ENCODE measurements at regions of chr18 and their contacts with region 1.

Region 1: DNA sequence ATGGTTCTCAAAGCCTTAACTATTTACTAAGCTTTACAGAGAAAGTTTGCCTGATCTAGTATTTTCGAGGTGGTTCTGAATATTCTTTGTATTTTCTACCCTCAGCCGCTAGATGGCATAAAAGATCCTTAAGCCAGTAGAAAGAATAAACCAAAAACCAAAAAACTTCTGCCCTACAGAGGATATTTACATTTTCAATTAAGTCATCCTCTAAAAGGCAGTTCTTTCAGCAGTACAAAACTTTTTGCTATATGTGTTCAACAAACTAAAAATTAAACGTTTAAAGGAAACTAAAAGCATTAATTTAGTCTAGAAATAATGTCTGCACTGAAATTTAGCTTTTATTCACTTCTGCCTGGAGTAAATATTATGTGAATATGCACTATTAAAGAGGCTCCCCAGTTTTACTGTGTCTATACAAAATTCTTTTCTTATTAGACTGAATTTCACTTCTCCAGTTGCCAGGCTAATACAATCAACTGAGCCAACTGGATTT is 297.5 kb downstream of the PIEZO2 start:
- DNase-seq: no peak
- H3K4me3 ChIP-seq: no peak overlapping the region
- H3K27ac ChIP-seq: no peak overlapping the region
- H3K4me1 ChIP-seq: no peaks in the 10 kb centered on the region
- H3K27me3 ChIP-seq: peaks cover 29% of the 10 kb centered on the region
- CTCF ChIP-seq: peak; percentile 80

Region 2: DNA sequence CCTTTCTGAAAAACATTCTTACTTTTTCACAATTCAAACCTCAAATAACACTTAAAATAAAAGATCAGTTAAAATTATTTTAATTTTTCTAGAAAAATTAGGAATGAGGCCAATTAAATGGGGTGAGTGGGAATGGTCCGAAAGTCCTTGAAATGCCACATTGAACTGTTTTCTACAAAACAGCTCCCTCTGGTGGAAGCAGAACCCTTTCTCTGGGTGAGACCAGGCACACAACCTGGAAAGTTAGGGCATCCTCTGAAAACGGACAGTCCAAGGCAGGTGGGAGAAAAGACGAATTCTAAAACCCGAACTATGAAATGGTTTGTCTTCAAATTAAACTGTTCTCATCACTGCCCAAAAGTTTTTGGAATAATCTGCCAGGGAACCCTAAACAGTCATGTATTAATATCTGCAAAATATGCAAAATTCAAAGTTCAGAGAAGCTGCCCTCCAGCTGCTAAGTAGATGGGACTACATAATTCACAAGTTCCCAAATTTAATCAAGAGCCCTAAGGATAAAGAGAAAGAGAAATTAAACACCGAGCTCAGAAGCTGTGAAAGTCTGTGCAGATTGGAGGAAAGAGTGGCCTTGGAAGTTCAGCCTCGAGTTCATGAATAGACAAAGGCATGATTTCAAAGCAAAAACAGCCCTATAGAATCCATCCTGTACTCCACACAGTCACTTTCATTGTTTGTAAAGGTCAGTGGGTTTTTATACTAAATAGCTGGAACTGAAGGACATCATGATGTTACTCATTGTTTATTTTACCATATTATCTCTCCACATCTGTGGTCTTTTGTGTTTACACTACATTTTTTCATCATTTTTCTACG is 189.2 kb after region 1 on chr18:
- intact Hi-C with region 1: loop called (anchors 5 kb)
- DNase-seq: no peak
- H3K4me3 ChIP-seq: no peak overlapping the region
- H3K27ac ChIP-seq: no peak overlapping the region
- H3K4me1 ChIP-seq: no peaks in the 10 kb centered on the region
- H3K27me3 ChIP-seq: peaks cover 28% of the 10 kb centered on the region
- CTCF ChIP-seq: peak; percentile 81

Region 3: DNA sequence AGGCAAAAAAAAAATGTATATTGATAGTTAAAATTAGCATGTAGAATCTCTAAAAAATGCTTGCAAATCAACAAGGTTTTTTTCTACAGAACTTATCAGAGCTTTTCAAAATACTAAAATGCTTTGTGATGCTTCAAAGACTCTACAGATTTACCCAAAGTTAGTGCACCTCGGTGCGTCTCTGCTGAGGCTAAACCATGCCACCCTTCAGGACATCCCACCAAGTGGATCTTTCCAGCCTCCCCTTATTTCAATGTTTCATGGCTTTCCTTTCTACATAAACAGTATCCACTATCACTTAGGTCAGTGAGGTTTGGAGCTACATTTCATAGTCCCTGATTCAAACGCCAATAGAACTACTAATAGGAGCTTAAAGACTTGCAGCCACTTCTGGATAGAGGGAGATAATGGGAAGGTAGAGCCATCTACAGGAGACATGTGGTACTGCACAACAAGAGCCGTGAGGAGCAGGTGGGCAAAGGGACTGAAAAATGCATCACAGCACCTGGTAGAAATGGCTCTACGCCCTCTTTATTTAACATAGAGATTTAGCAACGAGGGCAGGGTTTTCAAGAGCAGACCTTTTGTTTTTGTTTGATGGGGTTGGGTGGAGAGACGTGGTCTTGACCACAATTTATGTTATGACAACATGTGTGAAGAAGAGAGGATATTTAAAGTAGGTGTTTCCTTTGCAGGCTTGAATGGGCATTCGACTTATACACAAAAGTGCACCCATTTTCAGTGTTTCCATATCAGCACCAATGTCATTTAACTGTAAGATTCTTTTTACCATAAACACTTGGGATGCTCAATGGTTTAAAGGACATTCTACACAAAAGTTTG is 701.4 kb after region 1 on chr18:
- intact Hi-C with region 1: loop called (anchors 5 kb)
- DNase-seq: no peak
- H3K4me3 ChIP-seq: no peak overlapping the region
- H3K27ac ChIP-seq: no peak overlapping the region
- H3K4me1 ChIP-seq: no peaks in the 10 kb centered on the region
- H3K27me3 ChIP-seq: peaks cover 36% of the 10 kb centered on the region
- CTCF ChIP-seq: peak; percentile 94

Measured in left ventricle myocardium inferior (tissue), 1 donor.